ENCODE measurements at regions of chr9 and their contacts with region 1.

Region 1: DNA sequence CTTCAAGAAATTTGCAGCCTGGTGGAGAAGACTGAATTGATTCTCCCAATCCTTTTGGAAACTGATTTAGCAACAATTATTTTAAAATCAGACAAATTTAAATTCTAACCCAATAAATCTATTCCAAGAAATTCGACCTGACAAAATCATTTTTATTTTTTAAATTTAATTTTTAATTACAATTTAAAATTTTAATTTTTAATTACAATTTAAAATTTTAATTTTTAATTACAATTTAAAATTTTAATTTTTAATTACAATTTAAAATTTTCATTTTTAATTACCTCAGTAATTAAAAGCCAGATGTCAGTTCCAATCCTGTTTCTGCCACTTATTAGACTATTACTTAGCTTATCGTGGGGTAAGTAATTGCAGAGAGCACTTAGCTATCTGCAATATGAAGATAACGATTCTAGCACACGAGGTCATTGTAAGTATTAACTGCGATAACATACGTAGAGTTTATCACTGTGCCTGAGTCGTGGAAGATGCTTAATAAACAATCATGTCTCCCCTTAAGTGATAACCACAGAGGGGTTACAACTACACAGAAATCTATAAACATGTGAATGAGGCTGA is 346.4 kb upstream of the SLC24A2 start:
- DNase-seq: no peak
- ATAC-seq: no peak
- H3K4me3 ChIP-seq: no peak overlapping the region
- H3K4me3 Mint-ChIP-seq: no peak overlapping the region
- H3K27ac ChIP-seq: no peak overlapping the region
- H3K27ac Mint-ChIP-seq: no peak overlapping the region
- H3K4me1 ChIP-seq: no peaks in the 10 kb centered on the region
- H3K4me1 Mint-ChIP-seq: peaks cover 2% of the 10 kb centered on the region
- H3K27me3 ChIP-seq: no peaks in the 10 kb centered on the region
- H3K27me3 Mint-ChIP-seq: no peaks in the 10 kb centered on the region
- CTCF ChIP-seq: no peak

Region 2: GRCh38 chr9:20028849-20029231 is 106.4 kb before region 1 on chr9:
- CTCF ChIA-PET with region 1: no interaction called
- POLR2A ChIA-PET with region 1: no interaction called
- intact Hi-C with region 1: no loop called
- DNase-seq: no peak
- ATAC-seq: no peak
- H3K4me3 ChIP-seq: no peak overlapping the region
- H3K4me3 Mint-ChIP-seq: no peak overlapping the region
- H3K27ac ChIP-seq: no peak overlapping the region
- H3K27ac Mint-ChIP-seq: no peak overlapping the region
- H3K4me1 ChIP-seq: no peaks in the 10 kb centered on the region
- H3K4me1 Mint-ChIP-seq: no peaks in the 10 kb centered on the region
- H3K27me3 ChIP-seq: no peaks in the 10 kb centered on the region
- H3K27me3 Mint-ChIP-seq: no peaks in the 10 kb centered on the region
- CTCF ChIP-seq: no peak

Region 3: GRCh38 chr9:20095430-20096092 is 39.6 kb before region 1 on chr9:
- CTCF ChIA-PET with region 1: no interaction called
- POLR2A ChIA-PET with region 1: no interaction called
- intact Hi-C with region 1: no loop called
- DNase-seq: no peak
- ATAC-seq: no peak
- H3K4me3 ChIP-seq: no peak overlapping the region
- H3K4me3 Mint-ChIP-seq: no peak overlapping the region
- H3K27ac ChIP-seq: no peak overlapping the region
- H3K27ac Mint-ChIP-seq: no peak overlapping the region
- H3K4me1 ChIP-seq: no peaks in the 10 kb centered on the region
- H3K4me1 Mint-ChIP-seq: no peaks in the 10 kb centered on the region
- H3K27me3 ChIP-seq: no peaks in the 10 kb centered on the region
- H3K27me3 Mint-ChIP-seq: no peaks in the 10 kb centered on the region
- CTCF ChIP-seq: no peak

Region 4: DNA sequence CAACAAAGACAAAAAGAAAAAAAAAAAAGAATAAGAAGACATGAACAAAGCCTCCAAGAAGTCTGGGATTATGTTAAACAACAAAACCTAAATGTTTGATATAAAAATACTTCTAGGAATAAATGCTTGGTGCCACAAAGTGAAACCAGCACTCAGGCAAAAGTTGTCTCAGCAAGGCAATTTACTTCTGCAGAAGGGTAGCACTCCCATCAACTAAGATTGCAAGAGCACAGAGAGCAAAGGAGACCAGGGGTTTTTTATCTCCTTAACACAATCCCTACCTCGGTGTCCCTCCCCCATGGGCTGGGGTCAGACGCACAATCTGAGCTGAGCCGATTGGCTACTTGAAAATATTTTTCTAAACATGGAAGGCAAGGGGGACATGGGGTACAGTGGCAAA is 34.9 kb after region 1 on chr9:
- CTCF ChIA-PET with region 1: no interaction called
- POLR2A ChIA-PET with region 1: no interaction called
- intact Hi-C with region 1: loop called in 1 of 2 experiments (anchors 1 kb)
- DNase-seq: no peak
- ATAC-seq: no peak
- H3K4me3 ChIP-seq: no peak overlapping the region
- H3K4me3 Mint-ChIP-seq: no peak overlapping the region
- H3K27ac ChIP-seq: no peak overlapping the region
- H3K27ac Mint-ChIP-seq: no peak overlapping the region
- H3K4me1 ChIP-seq: no peaks in the 10 kb centered on the region
- H3K4me1 Mint-ChIP-seq: no peaks in the 10 kb centered on the region
- H3K27me3 ChIP-seq: no peaks in the 10 kb centered on the region
- H3K27me3 Mint-ChIP-seq: no peaks in the 10 kb centered on the region
- CTCF ChIP-seq: no peak

Region 5: DNA sequence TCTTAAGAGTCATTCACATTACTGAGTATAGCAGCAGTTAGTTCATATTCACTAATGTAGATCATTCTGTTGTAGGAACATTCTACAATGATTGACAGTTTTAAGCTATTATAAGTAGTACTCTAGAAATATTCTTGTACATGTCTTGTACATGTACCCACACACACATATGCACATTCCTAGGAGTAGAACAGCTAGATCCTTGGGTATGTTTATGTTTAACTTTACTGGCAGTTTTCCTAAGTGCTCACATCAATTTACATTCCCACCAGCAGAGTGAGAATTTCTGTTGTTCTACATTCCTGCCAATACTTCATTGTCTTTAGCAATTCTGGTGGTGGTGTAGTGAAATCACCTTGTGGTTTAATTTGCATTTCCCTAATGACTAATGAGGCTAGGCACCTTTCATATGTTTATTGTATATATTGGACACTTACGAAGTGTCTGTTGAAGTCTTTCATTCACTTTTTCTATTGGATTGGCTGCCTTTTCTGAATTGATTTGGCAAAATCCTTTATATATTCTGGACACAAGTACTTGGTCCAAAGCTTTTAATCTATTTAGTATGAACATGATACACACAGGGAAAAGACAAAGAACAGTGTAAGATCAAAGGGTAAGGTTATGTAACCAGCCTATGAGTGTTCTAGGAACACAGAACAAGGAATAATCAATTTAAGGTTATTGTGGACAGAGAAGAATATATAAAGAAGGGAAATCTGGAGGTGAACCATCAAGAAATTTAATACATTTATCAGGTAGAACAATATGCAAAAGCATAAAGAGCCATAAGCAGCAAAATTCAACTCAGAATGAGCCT is 391.5 kb after region 1 on chr9:
- CTCF ChIA-PET with region 1: no interaction called
- POLR2A ChIA-PET with region 1: no interaction called
- intact Hi-C with region 1: no loop called
- DNase-seq: no peak
- ATAC-seq: no peak
- H3K4me3 ChIP-seq: no peak overlapping the region
- H3K4me3 Mint-ChIP-seq: no peak overlapping the region
- H3K27ac ChIP-seq: no peak overlapping the region
- H3K27ac Mint-ChIP-seq: peak overlapping the region; percentile 29
- H3K4me1 ChIP-seq: peaks cover 41% of the 10 kb centered on the region
- H3K4me1 Mint-ChIP-seq: peaks cover 84% of the 10 kb centered on the region
- H3K27me3 ChIP-seq: no peaks in the 10 kb centered on the region
- H3K27me3 Mint-ChIP-seq: no peaks in the 10 kb centered on the region
- CTCF ChIP-seq: no peak

Measured in CD8-positive, alpha-beta T cell (primary cell).